Activated naive CD4-positive, alpha-beta T cell treated with anti-CD3 and anti-CD28 coated beads, Interleukin-2, amount 10 ng/mL, durations not matched to agents 7 days and 5 days (primary cell): ENCODE measurements at regions of chr17 and their contacts with region 1.

Region 1: DNA sequence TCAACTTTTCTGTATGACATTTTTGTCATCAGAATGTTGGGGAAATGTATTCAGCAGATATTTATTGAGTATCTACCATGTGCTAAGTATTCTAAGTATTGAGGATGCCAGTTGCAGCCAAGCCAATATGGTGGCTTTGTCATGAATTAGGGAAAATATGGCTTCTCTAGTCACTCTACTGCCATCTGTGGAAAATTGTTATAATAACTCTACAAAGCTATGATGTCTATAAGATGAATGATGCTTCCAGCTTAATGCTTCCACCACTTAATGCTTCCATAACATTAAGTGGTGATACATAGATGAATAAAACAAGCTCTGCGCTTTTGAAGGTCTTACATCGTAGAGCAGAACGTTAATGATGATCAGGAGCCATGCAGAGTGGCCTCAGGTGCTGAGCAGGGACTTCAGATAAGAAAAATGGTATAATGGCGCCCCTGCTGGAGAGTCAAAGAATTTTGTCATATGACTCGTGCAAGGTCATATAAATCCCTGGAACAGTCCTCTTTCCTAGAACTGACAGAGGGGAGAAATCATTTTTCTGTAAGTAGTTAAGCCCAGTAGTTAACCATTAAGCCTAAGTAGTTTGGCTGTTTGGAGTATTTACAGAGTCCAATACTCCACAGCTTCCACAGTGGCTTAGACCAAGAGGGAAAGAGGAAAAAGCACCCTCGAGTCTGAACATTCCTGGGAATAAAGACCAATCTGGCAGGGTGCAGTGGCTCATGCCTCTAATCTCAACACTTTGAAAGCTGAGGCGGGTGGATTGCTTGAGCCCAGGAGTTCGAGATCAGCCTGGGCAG is 2.7 kb upstream of the TMIGD1 start:
- DNase-seq: peak; percentile 73
- H3K4me3 Mint-ChIP-seq: no peak overlapping the region
- H3K27ac Mint-ChIP-seq: no peak overlapping the region
- H3K4me1 Mint-ChIP-seq: peaks cover 33% of the 10 kb centered on the region
- H3K27me3 Mint-ChIP-seq: peaks cover 17% of the 10 kb centered on the region

Region 2: DNA sequence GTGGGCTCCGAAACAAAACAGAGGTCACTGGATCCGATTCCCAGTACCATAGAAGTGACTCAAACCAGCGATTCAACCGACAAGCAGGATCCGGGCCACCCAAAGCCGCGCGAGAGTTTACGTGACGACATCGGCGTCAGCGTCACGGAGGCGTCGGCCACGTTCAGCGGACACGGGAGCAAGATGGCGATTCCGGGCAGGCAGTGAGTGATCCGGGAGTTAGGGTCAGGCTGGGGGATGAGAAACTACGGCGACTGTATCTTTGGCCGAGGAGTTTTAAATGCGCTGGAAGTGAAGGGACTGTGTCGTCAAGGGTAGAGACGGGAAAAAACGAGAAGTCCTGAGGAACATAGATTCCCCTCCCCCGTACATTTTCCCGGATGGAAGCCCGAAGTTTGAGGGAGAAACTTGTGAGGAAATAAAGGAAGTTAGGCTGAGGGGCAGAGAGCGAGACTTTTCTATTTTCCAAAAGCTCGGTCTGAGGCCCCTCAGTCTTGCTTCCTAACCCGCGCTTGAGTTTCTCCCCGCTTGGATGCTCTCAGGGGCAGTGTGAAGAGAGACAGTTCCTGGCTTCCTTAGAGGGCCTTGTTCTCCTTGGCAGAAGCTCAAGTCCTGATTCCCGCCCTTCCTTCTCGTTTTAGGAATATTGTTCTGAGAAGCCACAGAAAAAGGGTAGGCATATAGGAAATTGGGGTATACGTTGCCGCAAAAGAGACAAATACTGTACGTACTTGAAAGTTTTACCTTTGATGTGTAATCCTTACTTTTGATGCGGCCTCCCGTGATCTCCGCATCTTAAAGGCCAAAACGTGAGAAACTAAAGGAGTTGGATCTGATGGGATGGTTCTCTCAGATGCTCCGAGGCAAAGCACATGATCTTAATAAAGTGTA is 219.7 kb before region 1 on chr17 and contains the start of gene NSRP1:
- CTCF ChIA-PET with region 1: interaction called, 20 read pairs
- DNase-seq: peak; percentile 97
- H3K4me3 Mint-ChIP-seq: peak within 1 kb of the TSS; percentile 90
- H3K27ac Mint-ChIP-seq: peak within 1 kb of the TSS; percentile 97
- H3K4me1 Mint-ChIP-seq: peaks cover 48% of the 10 kb centered on the region
- H3K27me3 Mint-ChIP-seq: no peaks in the 10 kb centered on the region

Region 3: GRCh38 chr17:30124273-30124796 is 212.2 kb before region 1 on chr17:
- CTCF ChIA-PET with region 1: interaction called, 131 read pairs
- DNase-seq: no peak
- H3K4me3 Mint-ChIP-seq: no peak overlapping the region
- H3K27ac Mint-ChIP-seq: no peak overlapping the region
- H3K4me1 Mint-ChIP-seq: peaks cover 33% of the 10 kb centered on the region
- H3K27me3 Mint-ChIP-seq: no peaks in the 10 kb centered on the region

Region 4: DNA sequence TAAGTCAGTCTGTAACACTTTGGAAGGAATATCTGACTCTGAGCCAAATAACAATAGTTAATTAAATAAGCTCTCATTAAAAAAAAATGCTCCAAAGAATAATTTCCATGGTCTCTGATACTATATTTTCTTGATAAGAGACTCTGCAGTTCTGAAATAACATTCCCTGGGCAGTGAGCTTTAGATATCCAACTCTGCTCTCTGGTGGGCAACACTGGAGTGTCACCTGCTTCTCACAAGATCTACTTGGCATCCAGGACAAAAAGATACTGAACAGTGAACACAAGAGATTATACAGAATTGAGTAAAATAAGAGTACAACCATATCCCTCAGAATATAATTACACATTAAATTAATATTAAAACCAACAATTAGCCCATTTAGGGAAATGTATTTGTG is 58.5 kb before region 1 on chr17:
- CTCF ChIA-PET with region 1: interaction called, 18 read pairs
- DNase-seq: no peak
- H3K4me3 Mint-ChIP-seq: no peak overlapping the region
- H3K27ac Mint-ChIP-seq: no peak overlapping the region
- H3K4me1 Mint-ChIP-seq: no peaks in the 10 kb centered on the region
- H3K27me3 Mint-ChIP-seq: no peaks in the 10 kb centered on the region

Region 5: GRCh38 chr17:30291543-30292285 is 44.9 kb before region 1 on chr17 and contains the start of gene BLMH:
- CTCF ChIA-PET with region 1: interaction called, 24 read pairs
- DNase-seq: peak; percentile 88
- H3K4me3 Mint-ChIP-seq: peak within 1 kb of the TSS; percentile 91
- H3K27ac Mint-ChIP-seq: peak within 1 kb of the TSS; percentile 81
- H3K4me1 Mint-ChIP-seq: peaks cover 21% of the 10 kb centered on the region
- H3K27me3 Mint-ChIP-seq: no peaks in the 10 kb centered on the region

Region 6: GRCh38 chr17:30906101-30906911 is 569.7 kb after region 1 on chr17 and contains the start of gene TEFM:
- CTCF ChIA-PET with region 1: no interaction called
- DNase-seq: peak; percentile 91
- H3K4me3 Mint-ChIP-seq: peak within 1 kb of the TSS; percentile 98
- H3K27ac Mint-ChIP-seq: peak within 1 kb of the TSS; percentile 88
- H3K4me1 Mint-ChIP-seq: peaks cover 38% of the 10 kb centered on the region
- H3K27me3 Mint-ChIP-seq: no peaks in the 10 kb centered on the region